ENCODE measurements at regions of chr3 and their contacts with region 1.

Region 1: GRCh38 chr3:38136777-38137614 is at the start of gene ACAA1:
- DNase-seq: peak; percentile 90 to 99 (median 96)
- ATAC-seq: peak; percentile 85 to 86
- H3K4me3 Mint-ChIP-seq: peak within 1 kb of the TSS; percentile 85 to 100 (median 96)
- H3K27ac Mint-ChIP-seq: peak within 1 kb of the TSS; percentile 95 to 99 (median 98)
- H3K4me1 Mint-ChIP-seq: peaks cover 43 to 84% (median 76%) of the 10 kb centered on the region in 4 donors
- H3K27me3 Mint-ChIP-seq: no peaks in the 10 kb centered on the region
- polyA plus RNA-seq, gene ACAA1: 53.5 to 64.8 (median 55.6) TPM

Region 2: GRCh38 chr3:37652851-37653250 is 484.1 kb before region 1 on chr3:
- POLR2A ChIA-PET with region 1: no interaction called
- DNase-seq: no peak
- ATAC-seq: no peak
- H3K4me3 Mint-ChIP-seq: no peak overlapping the region
- H3K27ac Mint-ChIP-seq: no peak overlapping the region
- H3K4me1 Mint-ChIP-seq: no peaks in the 10 kb centered on the region
- H3K27me3 Mint-ChIP-seq: peaks cover 0 to 5% (median 3%) of the 10 kb centered on the region in 5 donors

Region 3: DNA sequence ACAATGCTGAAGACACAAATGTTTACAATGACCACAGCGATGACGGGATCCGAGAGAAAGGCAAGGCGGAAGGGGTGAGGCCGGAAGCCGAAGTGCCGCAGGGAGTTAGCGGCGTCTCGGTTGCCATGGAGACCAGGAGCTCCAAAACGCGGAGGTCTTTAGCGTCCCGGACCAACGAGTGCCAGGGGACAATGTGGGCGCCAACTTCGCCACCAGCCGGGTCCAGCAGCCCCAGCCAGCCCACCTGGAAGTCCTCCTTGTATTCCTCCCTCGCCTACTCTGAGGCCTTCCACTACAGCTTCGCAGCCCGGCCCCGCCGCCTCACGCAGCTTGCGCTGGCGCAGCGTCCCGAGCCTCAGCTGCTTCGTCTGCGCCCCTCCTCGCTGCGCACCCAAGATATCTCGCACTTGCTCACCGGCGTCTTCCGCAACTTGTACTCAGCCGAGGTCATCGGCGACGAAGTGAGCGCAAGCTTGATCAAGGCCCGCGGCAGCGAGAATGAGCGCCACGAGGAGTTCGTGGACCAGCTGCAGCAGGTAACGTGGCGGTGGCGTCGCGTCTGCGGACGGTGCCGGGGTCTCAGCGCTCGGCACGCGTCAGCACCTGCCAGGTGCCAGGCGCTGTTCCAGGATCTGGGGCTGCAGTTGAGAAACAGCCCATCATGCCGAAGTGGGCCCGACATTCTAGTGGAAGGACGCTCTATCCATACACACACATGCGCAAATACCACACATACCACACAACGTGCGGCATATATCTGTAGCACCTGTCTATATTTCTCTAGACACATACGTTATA is 97.7 kb before region 1 on chr3 and contains the start of gene DLEC1:
- POLR2A ChIA-PET with region 1: interaction called, 10 read pairs
- DNase-seq: peak; percentile 56 to 93 (median 83)
- ATAC-seq: peak; percentile 66 to 72
- H3K4me3 Mint-ChIP-seq: peak within 1 kb of the TSS; percentile 69 to 95 (median 86)
- H3K27ac Mint-ChIP-seq: peak within 1 kb of the TSS; percentile 86 to 96 (median 94)
- H3K4me1 Mint-ChIP-seq: peaks cover 27 to 33% (median 30%) of the 10 kb centered on the region in 4 donors
- H3K27me3 Mint-ChIP-seq: peaks cover 0 to 5% (median 4%) of the 10 kb centered on the region in 5 donors
- polyA plus RNA-seq, gene DLEC1: 0.31 to 0.37 (median 0.35) TPM

Region 4: GRCh38 chr3:38084334-38085310 is 52.4 kb before region 1 on chr3:
- POLR2A ChIA-PET with region 1: no interaction called
- DNase-seq: peak in 9 of 10 donors; percentile 21 to 71 (median 43)
- ATAC-seq: peak; percentile 66 to 70
- H3K4me3 Mint-ChIP-seq: peak overlapping the region in 6 of 10 donors; percentile 2 to 64 (median 22)
- H3K27ac Mint-ChIP-seq: peak overlapping the region in 9 of 10 donors; percentile 1 to 97 (median 76)
- H3K4me1 Mint-ChIP-seq: peaks cover 0 to 3% (median 0%) of the 10 kb centered on the region in 4 donors
- H3K27me3 Mint-ChIP-seq: peaks cover 0 to 1% (median 0%) of the 10 kb centered on the region in 5 donors

Region 5: DNA sequence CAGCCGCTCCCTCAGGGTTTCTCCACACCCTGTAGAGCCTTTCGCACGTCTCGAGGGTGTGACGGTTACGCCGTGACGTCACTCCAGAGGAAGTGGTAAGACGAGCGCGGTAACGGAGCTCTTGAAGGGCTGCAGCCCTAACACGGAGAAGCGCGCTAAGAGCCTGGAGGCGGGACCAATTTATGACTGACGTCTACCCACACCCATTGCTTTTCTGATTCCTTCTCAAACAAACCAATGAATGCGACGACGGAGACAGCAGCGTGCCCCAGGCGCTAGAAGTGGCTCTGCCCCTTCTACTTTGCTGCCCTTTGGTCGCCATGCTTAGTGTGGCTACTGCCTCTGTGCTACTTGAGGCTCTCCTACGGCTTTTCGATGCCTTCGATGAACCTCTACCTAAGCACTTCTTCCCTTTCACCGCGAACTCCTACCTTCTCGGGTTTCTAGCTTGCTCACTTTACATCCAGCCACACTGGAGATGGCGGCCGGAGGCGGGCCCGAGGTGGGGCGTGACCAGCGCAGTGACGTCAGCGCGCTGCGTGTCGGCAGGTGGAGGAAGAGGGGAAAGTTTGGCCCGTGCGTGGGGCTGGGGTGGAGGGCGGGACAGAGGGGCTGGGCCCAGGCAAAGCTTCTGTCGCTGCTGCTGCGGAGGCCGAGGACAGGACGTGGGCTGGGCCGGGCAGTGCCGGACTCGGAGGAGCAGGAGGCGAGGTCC is 28.1 kb after region 1 on chr3 and contains the start of gene OXSR1:
- POLR2A ChIA-PET with region 1: interaction called, 192 read pairs
- DNase-seq: peak; percentile 91 to 99 (median 98)
- ATAC-seq: peak; percentile 89
- H3K4me3 Mint-ChIP-seq: peak within 1 kb of the TSS; percentile 88 to 97 (median 95)
- H3K27ac Mint-ChIP-seq: peak within 1 kb of the TSS; percentile 99 to 100 (median 100)
- H3K4me1 Mint-ChIP-seq: peaks cover 21 to 48% (median 47%) of the 10 kb centered on the region in 4 donors
- H3K27me3 Mint-ChIP-seq: no peaks in the 10 kb centered on the region
- polyA plus RNA-seq, gene OXSR1: 12.9 to 14.0 (median 13.1) TPM